CD4-positive, alpha-beta memory T cell (primary cell): ENCODE measurements at regions of chr3 and their contacts with region 1.

Region 1: DNA sequence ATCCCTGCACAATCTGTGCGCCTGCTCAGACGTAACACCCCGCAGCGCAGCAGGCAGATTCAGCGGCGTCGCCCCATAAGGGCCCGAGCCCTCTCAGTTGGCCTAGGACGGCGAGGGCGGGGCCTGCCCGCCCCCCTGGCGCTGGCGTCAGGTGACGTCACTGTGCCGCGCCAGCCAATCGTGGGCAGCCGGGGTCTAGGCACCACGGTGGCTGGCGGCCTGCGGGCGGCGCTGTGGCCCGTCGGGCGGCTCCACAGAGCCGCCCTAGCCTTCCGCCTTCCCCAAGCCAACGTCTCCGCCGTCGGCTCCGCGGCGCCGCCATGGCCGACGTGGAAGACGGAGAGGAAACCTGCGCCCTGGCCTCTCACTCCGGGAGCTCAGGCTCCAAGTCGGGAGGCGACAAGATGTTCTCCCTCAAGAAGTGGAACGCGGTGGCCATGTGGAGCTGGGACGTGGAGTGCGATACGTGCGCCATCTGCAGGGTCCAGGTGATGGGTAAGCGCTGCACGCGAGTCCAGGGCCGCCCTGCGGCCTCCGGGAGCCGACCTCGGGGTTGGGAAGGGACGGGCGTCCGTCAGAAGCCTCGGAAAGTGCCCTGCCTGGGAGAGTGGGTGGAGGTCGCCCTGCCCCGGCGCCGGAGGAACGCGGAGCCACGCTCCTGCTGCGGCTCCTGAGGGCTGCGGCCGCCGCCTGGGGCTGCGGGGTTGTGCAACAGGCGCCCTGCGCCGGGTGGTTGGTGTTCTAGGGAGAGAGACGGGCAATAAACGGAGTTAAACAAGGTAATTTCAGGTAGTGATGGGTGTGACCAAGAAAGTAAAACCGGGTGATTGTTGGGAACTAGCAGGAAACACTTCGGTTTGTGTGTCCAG is at the start of gene RNF7:
- DNase-seq: peak; percentile 95 to 98 (median 98)
- H3K4me3 ChIP-seq: peak within 1 kb of the TSS; percentile 62 to 91
- H3K4me3 Mint-ChIP-seq: peak within 1 kb of the TSS; percentile 98 to 100 (median 99)
- H3K27ac ChIP-seq: peak within 1 kb of the TSS; percentile 96
- H3K27ac Mint-ChIP-seq: peak within 1 kb of the TSS; percentile 96 to 100 (median 99)
- H3K4me1 ChIP-seq: peaks cover 38% of the 10 kb centered on the region
- H3K4me1 Mint-ChIP-seq: peaks cover 21 to 54% (median 38%) of the 10 kb centered on the region in 4 donors
- H3K27me3 ChIP-seq: no peaks in the 10 kb centered on the region
- H3K27me3 Mint-ChIP-seq: no peaks in the 10 kb centered on the region
- total RNA-seq, gene RNF7: 56.3 to 65.2 TPM

Region 2: GRCh38 chr3:141231101-141231935 is 506.9 kb before region 1 on chr3 and contains the start of gene PXYLP1:
- CTCF ChIA-PET with region 1: no interaction called
- POLR2A ChIA-PET with region 1: interaction called, 12 read pairs
- intact Hi-C with region 1: loop called (anchors 1 kb)
- DNase-seq: peak; percentile 88 to 90 (median 89)
- H3K4me3 ChIP-seq: peak within 1 kb of the TSS; percentile 38 to 93
- H3K4me3 Mint-ChIP-seq: peak within 1 kb of the TSS; percentile 87 to 98 (median 93)
- H3K27ac ChIP-seq: peak within 1 kb of the TSS; percentile 81
- H3K27ac Mint-ChIP-seq: peak within 1 kb of the TSS; percentile 92 to 98 (median 96)
- H3K4me1 ChIP-seq: peaks cover 27% of the 10 kb centered on the region
- H3K4me1 Mint-ChIP-seq: peaks cover 28 to 59% (median 43%) of the 10 kb centered on the region in 4 donors
- H3K27me3 ChIP-seq: no peaks in the 10 kb centered on the region
- H3K27me3 Mint-ChIP-seq: peaks cover 0 to 2% of the 10 kb centered on the region in 2 donors
- total RNA-seq, gene PXYLP1: 17.2 to 22.6 TPM

Region 3: GRCh38 chr3:141460097-141460704 is 278.1 kb before region 1 on chr3:
- CTCF ChIA-PET with region 1: interaction called, 3 read pairs
- POLR2A ChIA-PET with region 1: no interaction called
- intact Hi-C with region 1: loop called (anchors 2 kb)
- DNase-seq: peak; percentile 80 to 87 (median 82)
- H3K4me3 ChIP-seq: no peak overlapping the region
- H3K4me3 Mint-ChIP-seq: no peak overlapping the region
- H3K27ac ChIP-seq: no peak overlapping the region
- H3K27ac Mint-ChIP-seq: peak overlapping the region in 2 of 7 donors; percentile 6 to 18
- H3K4me1 ChIP-seq: peaks cover under 1% of the 10 kb centered on the region
- H3K4me1 Mint-ChIP-seq: peaks cover under 1 to 13% (median 6%) of the 10 kb centered on the region in 4 donors
- H3K27me3 ChIP-seq: no peaks in the 10 kb centered on the region
- H3K27me3 Mint-ChIP-seq: no peaks in the 10 kb centered on the region

Region 4: DNA sequence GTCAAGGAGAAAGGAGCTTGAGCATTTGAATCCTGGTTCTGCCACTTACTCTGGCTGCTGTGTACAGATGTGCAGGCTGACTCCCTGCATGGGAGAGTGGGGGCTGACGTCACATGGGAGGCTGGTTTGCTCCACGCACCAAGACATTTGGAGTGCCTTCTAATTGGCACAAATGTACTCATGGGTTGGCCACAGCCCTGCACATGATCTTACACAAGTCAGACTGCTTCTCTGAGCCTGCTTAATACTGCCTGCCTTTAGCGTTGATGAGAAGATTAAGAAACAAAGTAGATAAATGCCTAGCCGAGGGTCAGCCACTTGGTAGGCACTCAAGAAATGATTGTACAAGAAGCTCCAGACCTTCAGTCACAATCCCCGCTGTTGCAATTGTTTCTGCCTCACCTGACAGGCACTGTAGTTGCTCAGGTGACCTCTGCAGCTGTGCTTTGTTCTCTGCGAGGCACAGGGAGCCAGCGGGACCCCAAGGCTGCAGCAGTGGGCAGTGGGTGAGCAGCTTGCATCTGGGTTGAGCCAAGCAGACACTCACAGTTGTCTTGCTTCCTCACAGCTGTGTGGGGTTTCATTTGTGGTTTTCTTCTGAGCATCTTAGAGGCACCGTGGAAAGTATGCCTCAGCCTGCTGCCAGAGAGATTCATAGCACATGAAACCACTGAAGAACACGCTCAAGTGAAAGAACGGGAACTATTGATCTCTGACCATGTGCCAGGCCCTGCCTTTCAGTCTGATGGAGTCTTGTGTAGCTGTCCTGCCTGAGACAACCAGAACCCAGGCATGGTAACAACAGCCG is 58.0 kb after region 1 on chr3:
- CTCF ChIA-PET with region 1: interaction called, 35 read pairs
- POLR2A ChIA-PET with region 1: interaction called, 73 read pairs
- intact Hi-C with region 1: loop called (anchors 1 kb)
- DNase-seq: peak; percentile 61 to 85 (median 66)
- H3K4me3 ChIP-seq: peak overlapping the region; percentile 61 to 76
- H3K4me3 Mint-ChIP-seq: peak overlapping the region; percentile 90 to 96 (median 92)
- H3K27ac ChIP-seq: peak overlapping the region; percentile 65
- H3K27ac Mint-ChIP-seq: peak overlapping the region; percentile 97 to 99 (median 98)
- H3K4me1 ChIP-seq: peaks cover 52% of the 10 kb centered on the region
- H3K4me1 Mint-ChIP-seq: peaks cover 46 to 60% (median 55%) of the 10 kb centered on the region in 4 donors
- H3K27me3 ChIP-seq: no peaks in the 10 kb centered on the region
- H3K27me3 Mint-ChIP-seq: no peaks in the 10 kb centered on the region

Region 5: GRCh38 chr3:141875374-141875892 is 137.2 kb after region 1 on chr3:
- CTCF ChIA-PET with region 1: interaction called, 76 read pairs
- POLR2A ChIA-PET with region 1: interaction called, 86 read pairs
- intact Hi-C with region 1: loop called (anchors 1 kb)
- DNase-seq: peak; percentile 75 to 84 (median 78)
- H3K4me3 ChIP-seq: peak overlapping the region; percentile 82 to 86
- H3K4me3 Mint-ChIP-seq: peak overlapping the region; percentile 85 to 96 (median 92)
- H3K27ac ChIP-seq: peak overlapping the region; percentile 95
- H3K27ac Mint-ChIP-seq: peak overlapping the region; percentile 93 to 99 (median 95)
- H3K4me1 ChIP-seq: peaks cover 28% of the 10 kb centered on the region
- H3K4me1 Mint-ChIP-seq: peaks cover 19 to 39% (median 30%) of the 10 kb centered on the region in 4 donors
- H3K27me3 ChIP-seq: no peaks in the 10 kb centered on the region
- H3K27me3 Mint-ChIP-seq: peaks cover 0 to 1% of the 10 kb centered on the region in 2 donors

Region 6: DNA sequence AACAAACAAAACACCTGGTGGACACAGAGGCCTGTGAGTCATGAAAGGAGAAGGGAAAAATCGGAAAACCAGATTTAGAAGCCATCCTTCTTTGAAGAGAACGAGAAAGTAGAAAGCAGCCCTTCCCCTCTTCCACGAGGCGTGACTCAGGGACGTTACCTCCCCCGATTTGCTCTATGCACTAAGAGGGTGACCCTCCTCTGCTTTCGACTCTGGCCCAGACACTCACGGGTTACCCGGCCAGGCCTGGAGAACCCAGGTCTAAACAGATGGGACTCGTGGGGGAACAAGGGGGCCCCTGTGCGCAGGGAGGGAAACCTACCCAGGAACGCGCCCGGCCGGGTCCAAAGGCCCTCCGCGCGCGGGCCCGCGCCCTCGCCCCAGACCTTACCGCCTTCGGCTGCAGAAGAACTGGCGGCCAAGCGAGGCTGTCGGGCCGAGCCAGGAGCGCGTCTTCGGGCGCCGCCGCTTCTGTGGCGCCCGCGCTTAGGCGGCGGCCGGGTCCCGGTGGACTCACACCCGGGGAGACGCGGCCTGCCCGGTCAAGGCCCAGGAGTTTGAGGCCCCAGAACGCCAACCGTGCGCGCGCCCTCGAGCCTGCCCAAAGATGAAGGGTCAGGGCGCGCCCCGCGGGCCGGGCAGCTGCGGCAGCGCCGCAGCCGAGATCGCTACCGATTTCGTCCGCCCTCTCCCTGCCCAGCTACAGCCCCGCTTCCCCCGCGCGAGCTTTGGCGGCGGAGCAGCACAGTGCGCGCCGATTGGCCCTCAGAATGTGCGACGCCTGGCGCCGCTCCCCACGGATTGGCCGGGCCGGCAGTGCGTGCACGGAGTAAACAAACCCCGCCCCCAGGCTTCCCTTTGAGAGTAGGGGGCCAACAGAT is 410.8 kb after region 1 on chr3 and contains the start of gene TFDP2:
- CTCF ChIA-PET with region 1: no interaction called
- POLR2A ChIA-PET with region 1: no interaction called
- intact Hi-C with region 1: loop called (anchors 10 kb)
- DNase-seq: peak; percentile 81 to 84 (median 84)
- H3K4me3 ChIP-seq: peak within 1 kb of the TSS; percentile 4 to 67
- H3K4me3 Mint-ChIP-seq: peak within 1 kb of the TSS; percentile 88 to 96 (median 90)
- H3K27ac ChIP-seq: peak within 1 kb of the TSS; percentile 66
- H3K27ac Mint-ChIP-seq: peak within 1 kb of the TSS; percentile 58 to 95 (median 92)
- H3K4me1 ChIP-seq: peaks cover 20% of the 10 kb centered on the region
- H3K4me1 Mint-ChIP-seq: peaks cover 23 to 35% (median 27%) of the 10 kb centered on the region in 4 donors
- H3K27me3 ChIP-seq: no peaks in the 10 kb centered on the region
- H3K27me3 Mint-ChIP-seq: no peaks in the 10 kb centered on the region
- total RNA-seq, gene TFDP2: 29.0 to 31.5 TPM

Region 7: GRCh38 chr3:142447852-142448823 is 709.9 kb after region 1 on chr3 and contains the start of gene XRN1:
- CTCF ChIA-PET with region 1: no interaction called
- POLR2A ChIA-PET with region 1: no interaction called
- intact Hi-C with region 1: loop called (anchors 1 kb)
- DNase-seq: peak; percentile 94 to 98 (median 95)
- H3K4me3 ChIP-seq: peak within 1 kb of the TSS; percentile 96 to 99
- H3K4me3 Mint-ChIP-seq: peak within 1 kb of the TSS; percentile 98 to 100 (median 99)
- H3K27ac ChIP-seq: peak within 1 kb of the TSS; percentile 100
- H3K27ac Mint-ChIP-seq: peak within 1 kb of the TSS; percentile 99 to 100 (median 100)
- H3K4me1 ChIP-seq: peaks cover 44% of the 10 kb centered on the region
- H3K4me1 Mint-ChIP-seq: peaks cover 27 to 54% (median 41%) of the 10 kb centered on the region in 4 donors
- H3K27me3 ChIP-seq: no peaks in the 10 kb centered on the region
- H3K27me3 Mint-ChIP-seq: no peaks in the 10 kb centered on the region
- total RNA-seq, gene XRN1: 102 to 104 TPM